AG04450 (cell line): ENCODE measurements at regions of chr3 and their contacts with region 1.

Region 1: DNA sequence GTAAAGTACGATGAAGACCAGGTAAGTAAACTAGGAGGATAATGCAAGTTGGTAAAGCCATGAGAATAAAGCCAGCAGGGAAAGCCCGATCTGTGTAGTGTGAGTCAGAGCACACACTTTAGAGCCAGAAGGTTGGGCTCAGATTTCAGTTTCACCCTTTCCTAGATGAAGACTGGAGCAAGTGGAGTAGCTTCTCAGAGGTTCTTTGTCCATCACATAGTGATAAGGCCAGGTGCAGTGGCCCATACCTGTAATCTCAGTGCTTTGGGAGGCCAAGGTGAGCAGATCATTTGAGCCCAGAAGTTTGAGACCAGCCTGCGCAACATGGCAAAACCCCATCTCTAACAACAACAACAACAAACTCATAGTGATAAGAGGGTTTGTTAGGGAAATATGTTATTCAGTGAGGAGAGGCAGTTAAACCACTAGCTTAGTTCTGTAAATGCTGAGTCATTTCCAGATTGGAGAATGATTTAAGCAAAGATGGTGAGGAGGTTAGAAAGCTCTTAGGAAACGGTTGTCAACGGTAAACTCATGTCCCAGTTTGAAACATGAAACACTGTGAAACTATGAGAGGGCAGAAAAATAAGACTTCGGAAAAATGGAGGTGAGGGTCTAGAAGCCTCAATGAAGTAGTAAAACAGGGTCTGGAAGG is 39.0 kb downstream of the IL12A start:
- DNase-seq: peak; percentile 62
- H3K4me3 ChIP-seq: no peak overlapping the region
- H3K27ac ChIP-seq: peak overlapping the region; percentile 97
- H3K27me3 ChIP-seq: no peaks in the 10 kb centered on the region
- CTCF ChIP-seq: no peak

Region 2: GRCh38 chr3:160012108-160012507 is 15.6 kb before region 1 on chr3:
- CTCF ChIA-PET with region 1: interaction called, 15 read pairs
- POLR2A ChIA-PET with region 1: no interaction called
- DNase-seq: no peak
- H3K4me3 ChIP-seq: no peak overlapping the region
- H3K27ac ChIP-seq: no peak overlapping the region
- H3K27me3 ChIP-seq: no peaks in the 10 kb centered on the region
- CTCF ChIP-seq: no peak

Region 3: DNA sequence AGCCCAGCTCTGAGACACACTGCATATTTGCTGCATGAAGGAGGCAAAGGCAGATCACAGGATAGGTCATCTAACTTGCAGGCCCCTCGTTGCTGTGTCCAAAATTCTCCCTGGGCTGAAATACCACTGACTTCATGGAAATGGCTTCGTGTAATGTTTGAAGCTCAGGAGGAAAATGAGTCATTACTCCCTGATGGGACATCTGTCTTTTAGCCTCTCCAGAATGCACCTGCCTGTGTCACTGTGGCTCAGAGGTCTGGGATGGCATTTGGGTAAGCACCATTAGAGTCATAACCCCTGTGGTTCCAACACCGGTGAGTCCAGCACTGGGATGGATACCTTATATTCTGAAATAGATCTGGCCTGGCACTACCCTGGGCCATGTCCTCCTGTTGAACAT is 12.5 kb after region 1 on chr3:
- CTCF ChIA-PET with region 1: interaction called, 11 read pairs
- POLR2A ChIA-PET with region 1: no interaction called
- DNase-seq: no peak
- H3K4me3 ChIP-seq: no peak overlapping the region
- H3K27ac ChIP-seq: no peak overlapping the region
- H3K27me3 ChIP-seq: peaks cover 16% of the 10 kb centered on the region
- CTCF ChIP-seq: no peak

Region 4: DNA sequence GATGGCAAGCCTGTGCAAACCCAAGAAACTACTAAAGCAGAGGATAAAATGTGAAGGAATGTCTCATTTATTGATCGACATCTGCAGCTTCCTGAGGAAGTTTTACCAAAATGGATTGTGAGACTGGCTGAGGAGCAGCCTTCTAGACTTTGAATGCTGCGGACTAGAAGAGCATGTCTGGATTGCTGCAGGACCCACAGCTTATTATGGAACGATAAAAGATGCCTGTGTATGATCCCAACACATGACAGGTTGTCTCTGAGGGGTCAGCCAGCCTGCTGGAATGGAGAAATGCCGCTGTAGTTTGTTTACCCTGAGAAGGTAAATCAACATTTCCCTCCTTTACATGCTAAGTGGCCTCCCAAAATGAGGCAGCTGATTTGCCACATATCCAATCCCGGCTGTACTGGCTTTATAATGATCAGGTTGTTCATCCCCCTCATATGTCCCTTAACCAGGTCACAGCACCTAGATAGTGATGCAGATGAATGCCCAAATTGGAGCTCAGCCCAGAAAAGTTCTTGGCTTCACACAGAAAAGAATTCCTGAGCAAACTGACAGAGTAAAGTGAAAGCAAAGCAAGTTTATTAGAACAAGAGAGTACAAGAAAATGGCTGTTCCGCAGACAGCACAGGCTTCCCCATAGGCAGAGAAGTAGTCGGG is 24.8 kb after region 1 on chr3:
- CTCF ChIA-PET with region 1: interaction called, 17 read pairs
- POLR2A ChIA-PET with region 1: interaction called, 5 read pairs
- DNase-seq: no peak
- H3K4me3 ChIP-seq: 0 out of 2 replicates have a peak overlapping the region, but pooled peaks have one; percentile 17
- H3K27ac ChIP-seq: no peak overlapping the region
- H3K27me3 ChIP-seq: no peaks in the 10 kb centered on the region
- CTCF ChIP-seq: no peak

Region 5: GRCh38 chr3:160343132-160343531 is 315.5 kb after region 1 on chr3:
- CTCF ChIA-PET with region 1: interaction called, 10 read pairs
- POLR2A ChIA-PET with region 1: no interaction called
- DNase-seq: no peak
- H3K4me3 ChIP-seq: no peak overlapping the region
- H3K27ac ChIP-seq: no peak overlapping the region
- H3K27me3 ChIP-seq: no peaks in the 10 kb centered on the region
- CTCF ChIP-seq: peak; percentile 42

Region 6: GRCh38 chr3:160413613-160414248 is 386.1 kb after region 1 on chr3:
- CTCF ChIA-PET with region 1: interaction called, 22 read pairs
- POLR2A ChIA-PET with region 1: no interaction called
- DNase-seq: peak; percentile 74
- H3K4me3 ChIP-seq: no peak overlapping the region
- H3K27ac ChIP-seq: no peak overlapping the region
- H3K27me3 ChIP-seq: no peaks in the 10 kb centered on the region
- CTCF ChIP-seq: peak; percentile 93

Region 7: GRCh38 chr3:160486459-160486869 is 458.8 kb after region 1 on chr3:
- CTCF ChIA-PET with region 1: interaction called, 12 read pairs
- POLR2A ChIA-PET with region 1: no interaction called
- DNase-seq: no peak
- H3K4me3 ChIP-seq: no peak overlapping the region
- H3K27ac ChIP-seq: no peak overlapping the region
- H3K27me3 ChIP-seq: no peaks in the 10 kb centered on the region
- CTCF ChIP-seq: peak; percentile 54